CD8-positive, alpha-beta T cell (primary cell): ENCODE measurements at regions of chr1 and their contacts with region 1.

Region 1: DNA sequence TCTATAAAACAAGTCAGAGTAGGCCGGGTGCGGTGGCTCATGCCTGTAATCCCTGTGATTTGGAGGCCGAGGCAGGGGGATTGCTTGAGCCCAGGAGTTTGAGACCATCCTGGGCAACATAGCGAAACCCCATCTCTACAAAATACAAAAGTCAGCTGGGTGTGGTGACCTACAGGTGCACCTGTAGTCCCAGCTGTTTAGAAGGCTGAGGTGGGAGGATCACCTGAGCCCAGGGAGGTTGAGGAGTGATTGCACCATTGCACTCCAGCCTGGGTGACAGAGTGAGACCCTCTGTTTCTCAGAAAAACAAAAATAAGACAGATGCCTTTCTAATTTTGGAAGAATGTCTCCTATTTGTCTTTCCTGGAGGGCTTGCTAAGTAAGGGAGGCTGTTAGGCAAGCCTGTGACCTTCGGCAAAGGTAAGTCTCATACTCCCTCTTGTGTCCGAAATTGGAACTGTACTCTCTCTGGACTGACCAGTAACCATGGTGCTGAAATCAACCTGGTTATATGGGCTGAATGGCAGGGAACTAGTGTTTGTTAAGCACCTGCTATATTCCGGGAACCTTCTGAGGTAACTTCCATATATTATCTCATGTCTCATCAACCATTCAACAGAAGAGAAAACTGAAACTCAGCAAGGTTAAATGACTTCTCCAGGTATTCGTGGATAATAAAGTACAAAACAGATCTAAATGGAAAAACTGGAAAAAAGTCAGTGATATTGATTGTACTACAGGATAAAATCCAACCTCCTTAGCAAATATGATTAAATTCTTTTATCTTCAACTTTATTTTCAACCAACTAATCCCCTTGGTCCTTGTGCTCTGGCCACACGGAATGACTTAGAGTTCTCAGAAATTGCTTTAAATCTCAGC is 11.8 kb upstream of the RAB3B start:
- DNase-seq: peak in 8 of 9 experiments; percentile 3 to 84 (median 46)
- ATAC-seq: peak; percentile 96
- H3K4me3 ChIP-seq: no peak overlapping the region
- H3K4me3 Mint-ChIP-seq: no peak overlapping the region
- H3K27ac ChIP-seq: no peak overlapping the region
- H3K27ac Mint-ChIP-seq: no peak overlapping the region
- H3K4me1 ChIP-seq: no peaks in the 10 kb centered on the region
- H3K4me1 Mint-ChIP-seq: no peaks in the 10 kb centered on the region
- H3K27me3 ChIP-seq: no peaks in the 10 kb centered on the region
- H3K27me3 Mint-ChIP-seq: peaks cover 26% of the 10 kb centered on the region
- CTCF ChIP-seq: peak; percentile 89

Region 2: DNA sequence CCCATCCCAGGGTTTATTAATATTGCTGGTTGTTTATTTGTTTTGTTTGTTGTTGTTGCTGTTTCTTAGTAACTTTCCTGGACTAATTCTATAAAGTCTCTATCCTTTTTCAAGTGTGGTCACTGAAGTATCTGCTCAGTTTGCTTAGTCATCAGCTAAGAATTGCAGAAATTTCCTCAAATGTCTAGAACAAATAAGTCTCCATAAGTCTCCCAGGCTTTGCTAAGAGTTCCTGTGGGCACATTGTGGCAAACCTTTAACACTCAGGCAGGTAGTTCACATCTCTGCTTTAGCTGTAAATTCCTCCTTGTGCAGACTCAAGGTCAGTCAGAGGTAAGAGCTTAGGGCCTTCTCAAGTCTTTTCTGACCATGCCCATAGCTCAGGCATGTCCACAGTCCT is 939.2 kb before region 1 on chr1:
- CTCF ChIA-PET with region 1: no interaction called
- POLR2A ChIA-PET with region 1: no interaction called
- intact Hi-C with region 1: no loop called
- DNase-seq: no peak
- ATAC-seq: no peak
- H3K4me3 ChIP-seq: no peak overlapping the region
- H3K4me3 Mint-ChIP-seq: no peak overlapping the region
- H3K27ac ChIP-seq: no peak overlapping the region
- H3K27ac Mint-ChIP-seq: no peak overlapping the region
- H3K4me1 ChIP-seq: no peaks in the 10 kb centered on the region
- H3K4me1 Mint-ChIP-seq: no peaks in the 10 kb centered on the region
- H3K27me3 ChIP-seq: no peaks in the 10 kb centered on the region
- H3K27me3 Mint-ChIP-seq: peaks cover 33% of the 10 kb centered on the region
- CTCF ChIP-seq: no peak

Region 3: GRCh38 chr1:51799372-51799771 is 202.9 kb before region 1 on chr1:
- CTCF ChIA-PET with region 1: no interaction called
- POLR2A ChIA-PET with region 1: no interaction called
- intact Hi-C with region 1: loop called in 1 of 2 experiments (anchors 10 kb)
- DNase-seq: no peak
- ATAC-seq: no peak
- H3K4me3 ChIP-seq: no peak overlapping the region
- H3K4me3 Mint-ChIP-seq: no peak overlapping the region
- H3K27ac ChIP-seq: no peak overlapping the region
- H3K27ac Mint-ChIP-seq: no peak overlapping the region
- H3K4me1 ChIP-seq: no peaks in the 10 kb centered on the region
- H3K4me1 Mint-ChIP-seq: no peaks in the 10 kb centered on the region
- H3K27me3 ChIP-seq: no peaks in the 10 kb centered on the region
- H3K27me3 Mint-ChIP-seq: no peaks in the 10 kb centered on the region
- CTCF ChIP-seq: no peak

Region 4: DNA sequence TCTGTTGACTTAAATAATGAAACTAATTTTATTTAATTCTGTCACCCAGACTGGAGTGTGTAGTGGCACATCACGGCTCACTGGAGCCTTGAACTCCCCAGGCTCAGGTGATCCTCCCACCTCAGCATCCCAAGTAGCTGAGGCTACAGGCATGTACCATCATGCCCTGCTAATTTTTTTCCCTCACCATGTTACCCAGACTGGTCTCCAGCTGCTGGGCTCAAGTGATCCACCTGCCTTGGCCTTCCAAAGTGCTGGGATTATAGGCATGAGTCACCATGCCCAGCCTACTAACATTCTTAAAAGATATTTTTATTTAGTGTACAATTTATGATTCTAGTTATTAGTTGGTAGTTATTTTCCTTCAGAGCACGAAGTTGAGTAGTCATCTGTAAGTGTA is 173.2 kb before region 1 on chr1:
- CTCF ChIA-PET with region 1: no interaction called
- POLR2A ChIA-PET with region 1: interaction called, 5 read pairs
- intact Hi-C with region 1: loop called in 1 of 2 experiments (anchors 10 kb)
- DNase-seq: no peak
- ATAC-seq: no peak
- H3K4me3 ChIP-seq: no peak overlapping the region
- H3K4me3 Mint-ChIP-seq: no peak overlapping the region
- H3K27ac ChIP-seq: no peak overlapping the region
- H3K27ac Mint-ChIP-seq: no peak overlapping the region
- H3K4me1 ChIP-seq: no peaks in the 10 kb centered on the region
- H3K4me1 Mint-ChIP-seq: no peaks in the 10 kb centered on the region
- H3K27me3 ChIP-seq: no peaks in the 10 kb centered on the region
- H3K27me3 Mint-ChIP-seq: no peaks in the 10 kb centered on the region
- CTCF ChIP-seq: no peak

Region 5: DNA sequence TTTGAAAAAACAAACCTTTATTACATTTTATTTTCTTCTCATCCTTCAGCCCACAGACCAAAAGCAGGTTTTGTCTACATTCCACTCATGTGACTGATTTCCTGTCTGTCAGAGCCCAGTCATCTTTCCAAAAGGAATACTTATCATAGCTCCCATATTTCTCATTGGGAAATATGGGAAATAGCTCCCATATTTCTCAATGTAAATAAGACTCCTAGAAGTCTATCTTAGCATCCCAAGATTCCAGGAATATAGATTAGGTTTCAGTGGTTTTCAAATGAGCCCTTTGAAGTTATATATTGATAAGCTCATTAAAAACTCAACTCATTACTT is 104.6 kb before region 1 on chr1:
- CTCF ChIA-PET with region 1: interaction called, 57 read pairs
- POLR2A ChIA-PET with region 1: no interaction called
- intact Hi-C with region 1: loop called (anchors 1 kb)
- DNase-seq: no peak
- ATAC-seq: no peak
- H3K4me3 ChIP-seq: no peak overlapping the region
- H3K4me3 Mint-ChIP-seq: no peak overlapping the region
- H3K27ac ChIP-seq: no peak overlapping the region
- H3K27ac Mint-ChIP-seq: no peak overlapping the region
- H3K4me1 ChIP-seq: no peaks in the 10 kb centered on the region
- H3K4me1 Mint-ChIP-seq: no peaks in the 10 kb centered on the region
- H3K27me3 ChIP-seq: peaks cover 0 to 2% of the 10 kb centered on the region in 2 experiments
- H3K27me3 Mint-ChIP-seq: peaks cover 49% of the 10 kb centered on the region
- CTCF ChIP-seq: no peak

Region 6: DNA sequence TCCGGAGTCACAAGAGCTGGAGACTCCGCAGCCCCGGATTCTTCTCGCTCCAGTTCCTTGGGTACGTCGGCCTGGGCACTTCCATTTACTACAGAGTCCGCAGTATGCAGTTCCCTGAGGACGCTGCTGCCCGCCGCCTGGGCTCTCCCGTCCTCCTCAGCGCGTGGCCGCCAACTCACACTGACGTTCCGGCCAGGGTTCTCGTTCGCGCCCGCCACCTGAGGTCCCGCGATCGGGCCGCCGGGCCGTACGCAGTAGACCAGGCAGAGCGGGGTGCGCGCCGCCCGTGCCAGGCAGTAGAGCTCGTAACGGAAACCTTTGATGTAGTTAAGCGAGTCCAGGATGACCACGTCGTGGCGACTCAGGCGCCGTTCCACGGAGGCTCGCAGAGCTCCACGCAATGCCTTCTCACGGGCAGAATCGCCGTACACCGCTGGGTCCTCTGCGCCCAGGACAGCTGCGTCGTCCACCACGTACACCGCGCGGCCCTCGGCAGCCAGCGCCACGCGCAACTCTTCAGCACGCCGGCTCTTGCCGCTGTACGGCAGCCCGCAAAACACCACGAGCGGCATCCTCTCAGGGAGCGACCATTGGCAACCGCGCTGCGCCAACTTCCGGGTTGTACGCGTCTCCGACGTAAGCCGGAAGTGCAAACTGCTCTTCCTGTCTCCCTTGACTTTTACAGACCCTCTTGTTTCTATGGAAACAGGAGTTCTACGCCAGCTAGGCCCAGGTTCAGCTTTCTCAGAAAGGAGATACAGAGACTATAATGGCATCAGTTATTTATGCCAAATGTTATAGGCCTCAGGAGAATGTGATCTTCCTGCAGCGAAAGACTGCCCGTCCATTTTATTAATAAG is 31.1 kb after region 1 on chr1 and contains the start of gene KTI12:
- CTCF ChIA-PET with region 1: interaction called, 4 read pairs
- POLR2A ChIA-PET with region 1: no interaction called
- intact Hi-C with region 1: loop called in 1 of 2 experiments (anchors 1 kb)
- DNase-seq: peak; percentile 78 to 97 (median 88)
- ATAC-seq: peak; percentile 92
- H3K4me3 ChIP-seq: peak within 1 kb of the TSS; percentile 78 to 80
- H3K4me3 Mint-ChIP-seq: peak within 1 kb of the TSS; percentile 92
- H3K27ac ChIP-seq: peak within 1 kb of the TSS; percentile 88 to 89
- H3K27ac Mint-ChIP-seq: peak within 1 kb of the TSS; percentile 95
- H3K4me1 ChIP-seq: peaks cover 30% of the 10 kb centered on the region
- H3K4me1 Mint-ChIP-seq: peaks cover 38% of the 10 kb centered on the region
- H3K27me3 ChIP-seq: no peaks in the 10 kb centered on the region
- H3K27me3 Mint-ChIP-seq: no peaks in the 10 kb centered on the region
- CTCF ChIP-seq: no peak
- total RNA-seq, gene KTI12: 23.6 to 24.7 TPM